ENCODE measurements at regions of chr10 and their contacts with region 1.

Region 1: DNA sequence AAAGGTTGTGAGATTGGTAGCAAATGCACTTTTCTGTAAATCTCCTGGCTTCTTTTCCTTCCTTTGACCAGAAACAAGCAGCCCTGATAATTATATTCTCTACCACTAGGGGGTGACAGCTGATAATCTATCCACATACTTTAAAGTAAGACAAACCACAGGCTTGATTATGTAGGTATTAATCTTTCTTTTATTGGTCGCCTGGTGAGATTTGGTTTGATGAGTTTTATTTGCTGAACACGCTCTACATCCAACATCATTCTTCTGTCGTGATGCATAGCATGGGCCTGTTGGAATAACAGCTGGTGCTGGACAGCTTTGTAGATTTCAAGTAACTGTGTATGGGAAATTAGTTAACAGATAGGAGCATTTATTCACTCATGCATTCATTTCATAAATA is 63.5 kb downstream of the ZNF365 start:
- DNase-seq: no peak
- ATAC-seq: peak in 2 of 4 donors; percentile 57 to 59
- H3K4me3 ChIP-seq: no peak overlapping the region
- H3K27ac ChIP-seq: no peak overlapping the region
- H3K4me1 ChIP-seq: peaks cover 0 to 10% (median 0%) of the 10 kb centered on the region in 12 donors
- H3K27me3 ChIP-seq: no peaks in the 10 kb centered on the region
- CTCF ChIP-seq: peak; percentile 69 to 82 (median 75)
- POLR2A ChIP-seq: no peak

Region 2: GRCh38 chr10:62554632-62555199 is 117.0 kb after region 1 on chr10:
- intact Hi-C with region 1: loop called in 1 of 10 experiments (anchors 10 kb)
- DNase-seq: no peak
- ATAC-seq: peak in 1 of 4 donors; percentile 50
- H3K4me3 ChIP-seq: no peak overlapping the region
- H3K27ac ChIP-seq: no peak overlapping the region
- H3K4me1 ChIP-seq: peaks cover 0 to 1% (median 0%) of the 10 kb centered on the region in 12 donors
- H3K27me3 ChIP-seq: peaks cover 0 to 2% (median 0%) of the 10 kb centered on the region in 9 donors
- CTCF ChIP-seq: peak in 11 of 12 donors; percentile 26 to 56 (median 44)
- POLR2A ChIP-seq: no peak

Region 3: DNA sequence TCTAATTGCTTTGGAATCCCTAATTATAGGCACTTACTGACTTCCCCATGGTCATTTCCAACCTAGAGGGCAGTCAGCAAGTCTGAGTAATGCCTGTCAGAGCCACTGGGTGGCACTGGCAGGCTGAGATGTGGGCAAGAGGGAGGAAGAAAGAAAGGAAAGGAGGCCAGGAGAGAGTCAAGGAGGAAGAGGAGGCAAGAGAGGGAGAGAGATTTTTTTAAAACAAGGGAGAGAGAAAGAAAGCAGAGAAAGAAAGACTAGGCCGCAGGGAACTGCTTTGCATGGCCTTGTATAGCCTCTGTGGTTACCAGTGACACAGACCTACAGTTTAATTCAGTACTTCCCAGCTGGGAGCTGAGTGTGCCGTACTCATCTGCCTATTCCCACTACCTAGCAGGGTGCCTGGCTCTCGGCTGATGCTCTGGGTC is 156.4 kb after region 1 on chr10:
- intact Hi-C with region 1: loop called in 1 of 10 experiments (anchors 10 kb)
- DNase-seq: peak; percentile 51 to 79 (median 58)
- ATAC-seq: peak in 3 of 4 donors; percentile 83 to 94 (median 86)
- H3K4me3 ChIP-seq: no peak overlapping the region
- H3K27ac ChIP-seq: no peak overlapping the region
- H3K4me1 ChIP-seq: peaks cover 0 to 5% (median 0%) of the 10 kb centered on the region in 12 donors
- H3K27me3 ChIP-seq: no peaks in the 10 kb centered on the region
- CTCF ChIP-seq: peak; percentile 71 to 91 (median 86)
- POLR2A ChIP-seq: no peak

Region 4: GRCh38 chr10:63071140-63071539 is 633.4 kb after region 1 on chr10:
- intact Hi-C with region 1: loop called in 1 of 10 experiments (anchors 10 kb)
- DNase-seq: no peak
- ATAC-seq: no peak
- H3K4me3 ChIP-seq: no peak overlapping the region
- H3K27ac ChIP-seq: no peak overlapping the region
- H3K4me1 ChIP-seq: no peaks in the 10 kb centered on the region
- H3K27me3 ChIP-seq: peaks cover 0 to 20% (median 2%) of the 10 kb centered on the region in 9 donors
- CTCF ChIP-seq: no peak
- POLR2A ChIP-seq: no peak

Region 5: GRCh38 chr10:63083904-63084689 is 646.4 kb after region 1 on chr10:
- intact Hi-C with region 1: loop called in 8 of 10 experiments (anchors 5 to 10 kb)
- DNase-seq: peak in 4 of 5 donors; percentile 53 to 74 (median 56)
- ATAC-seq: peak; percentile 64 to 94 (median 82)
- H3K4me3 ChIP-seq: no peak overlapping the region
- H3K27ac ChIP-seq: peak overlapping the region in 6 of 12 donors; percentile 6 to 54 (median 20)
- H3K4me1 ChIP-seq: peaks cover 0 to 14% (median 0%) of the 10 kb centered on the region in 12 donors
- H3K27me3 ChIP-seq: no peaks in the 10 kb centered on the region
- CTCF ChIP-seq: peak; percentile 52 to 78 (median 70)
- POLR2A ChIP-seq: no peak